Activated B cell treated with CpG ODN at 0.5 μM for 24 hours (primary cell): ENCODE measurements at regions of chr5 and their contacts with region 1.

Region 1: GRCh38 chr5:140189977-140190871 is 15.2 kb downstream of the CYSTM1 start:
- DNase-seq: no peak
- ATAC-seq: no peak
- H3K4me3 Mint-ChIP-seq: no peak overlapping the region
- H3K27ac Mint-ChIP-seq: no peak overlapping the region
- H3K4me1 Mint-ChIP-seq: no peaks in the 10 kb centered on the region
- H3K27me3 Mint-ChIP-seq: no peaks in the 10 kb centered on the region
- CTCF ChIP-seq: no peak

Region 2: DNA sequence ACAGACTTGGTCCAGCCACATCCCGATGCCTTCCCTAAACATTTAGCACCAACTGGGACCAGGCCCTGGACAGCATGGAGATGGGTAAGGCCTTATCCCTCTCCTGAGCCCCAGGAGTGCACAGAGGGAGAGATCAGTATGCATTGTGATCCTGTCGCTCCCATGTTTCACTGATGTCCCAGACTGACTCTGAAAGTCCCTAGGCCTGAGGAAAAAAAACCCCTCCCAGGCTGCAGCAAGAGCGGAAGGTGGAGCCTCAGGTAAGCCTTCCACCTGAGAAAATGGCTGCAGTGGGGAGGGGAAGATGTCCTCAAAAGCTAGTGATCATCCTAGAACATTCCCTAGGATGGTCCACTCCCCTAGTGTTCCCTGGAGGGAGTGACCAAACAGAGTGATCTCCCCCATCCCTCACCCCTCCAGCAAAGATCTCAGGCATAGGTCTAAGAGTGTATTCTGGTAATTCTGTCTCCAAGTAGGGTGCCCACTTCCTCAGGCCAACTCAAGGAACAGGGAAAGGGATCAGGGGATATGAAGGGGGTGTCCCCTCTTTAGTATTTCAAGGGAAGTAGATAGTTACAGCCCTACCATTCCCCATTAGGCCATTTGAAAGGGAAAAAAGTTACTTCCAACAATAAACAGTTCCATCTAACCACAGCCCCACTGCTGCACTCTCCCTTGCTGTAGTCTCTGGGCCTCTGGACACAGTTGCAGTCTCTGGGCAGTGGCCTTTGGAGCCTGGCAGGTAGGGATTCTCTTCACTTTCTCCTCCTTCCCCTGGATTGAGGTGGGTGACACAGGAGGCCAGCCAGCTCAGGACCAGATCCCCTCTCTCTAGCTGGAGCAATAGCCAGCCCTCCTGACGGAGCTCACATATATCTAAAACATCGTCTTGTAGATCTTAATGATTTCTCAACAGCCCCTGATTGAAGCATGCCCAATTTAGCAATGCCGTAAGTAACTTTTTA is 548.8 kb before region 1 on chr5:
- CTCF ChIA-PET with region 1: no interaction called
- POLR2A ChIA-PET with region 1: interaction called, 11 read pairs
- intact Hi-C with region 1: no loop called
- DNase-seq: no peak
- ATAC-seq: no peak
- H3K4me3 Mint-ChIP-seq: no peak overlapping the region
- H3K27ac Mint-ChIP-seq: peak overlapping the region; percentile 22
- H3K4me1 Mint-ChIP-seq: peaks cover 78% of the 10 kb centered on the region
- H3K27me3 Mint-ChIP-seq: no peaks in the 10 kb centered on the region
- CTCF ChIP-seq: no peak

Region 3: GRCh38 chr5:140509898-140510297 is 319.7 kb after region 1 on chr5:
- CTCF ChIA-PET with region 1: no interaction called
- POLR2A ChIA-PET with region 1: no interaction called
- intact Hi-C with region 1: no loop called
- DNase-seq: no peak
- ATAC-seq: no peak
- H3K4me3 Mint-ChIP-seq: no peak overlapping the region
- H3K27ac Mint-ChIP-seq: no peak overlapping the region
- H3K4me1 Mint-ChIP-seq: no peaks in the 10 kb centered on the region
- H3K27me3 Mint-ChIP-seq: no peaks in the 10 kb centered on the region
- CTCF ChIP-seq: no peak